ENCODE measurements at regions of chr5 and their contacts with region 1.

Region 1: GRCh38 chr5:72871366-72872024 is 55.0 kb downstream of the TNPO1 start:
- DNase-seq: no peak
- H3K4me3 Mint-ChIP-seq: no peak overlapping the region
- H3K27ac Mint-ChIP-seq: peak overlapping the region; percentile 78
- H3K4me1 Mint-ChIP-seq: peaks cover 15% of the 10 kb centered on the region
- H3K27me3 Mint-ChIP-seq: no peaks in the 10 kb centered on the region

Region 2: DNA sequence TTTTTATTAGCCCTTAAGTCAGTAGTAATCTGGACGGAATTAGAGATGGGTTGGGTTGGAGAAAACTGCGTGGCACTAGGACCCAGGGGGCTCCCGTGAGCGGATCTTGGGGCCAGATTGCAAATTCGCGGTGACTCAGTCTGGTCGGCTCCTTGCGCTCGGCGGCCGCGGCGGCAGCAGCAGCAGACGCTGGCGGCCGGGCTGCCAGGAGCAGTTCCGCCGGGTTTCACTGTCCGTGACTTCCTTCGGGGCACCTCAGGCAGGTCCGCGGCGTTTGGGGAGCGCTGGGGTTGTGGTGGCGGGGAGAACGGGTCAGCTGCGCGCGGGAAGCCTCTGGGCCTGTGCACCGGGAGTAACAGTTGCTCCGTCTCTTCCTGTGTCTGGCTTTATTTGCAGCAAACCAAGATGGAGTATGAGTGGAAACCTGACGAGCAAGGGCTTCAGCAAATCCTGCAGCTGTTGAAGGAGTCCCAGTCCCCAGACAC is 23.5 kb before region 1 on chr5:
- CTCF ChIA-PET with region 1: no interaction called
- POLR2A ChIA-PET with region 1: interaction called, 7 read pairs
- intact Hi-C with region 1: loop called (anchors 2 kb)
- DNase-seq: peak; percentile 91
- H3K4me3 Mint-ChIP-seq: peak overlapping the region; percentile 99
- H3K27ac Mint-ChIP-seq: peak overlapping the region; percentile 98
- H3K4me1 Mint-ChIP-seq: peaks cover 40% of the 10 kb centered on the region
- H3K27me3 Mint-ChIP-seq: no peaks in the 10 kb centered on the region

Region 3: GRCh38 chr5:73093943-73094342 is 222.4 kb after region 1 on chr5:
- CTCF ChIA-PET with region 1: no interaction called
- POLR2A ChIA-PET with region 1: no interaction called
- intact Hi-C with region 1: no loop called
- DNase-seq: peak; percentile 27
- H3K4me3 Mint-ChIP-seq: no peak overlapping the region
- H3K27ac Mint-ChIP-seq: no peak overlapping the region
- H3K4me1 Mint-ChIP-seq: peaks cover 11% of the 10 kb centered on the region
- H3K27me3 Mint-ChIP-seq: peaks cover 15% of the 10 kb centered on the region

Measured in activated CD4-positive, alpha-beta memory T cell treated with anti-CD3 and anti-CD28 coated beads for 36 hours (primary cell).